ENCODE measurements at regions of chr12 and their contacts with region 1.

Region 1: GRCh38 chr12:49060237-49061156 is at the start of gene KMT2D:
- DNase-seq: peak; percentile 92
- CTCF ChIP-seq: no peak

Region 2: DNA sequence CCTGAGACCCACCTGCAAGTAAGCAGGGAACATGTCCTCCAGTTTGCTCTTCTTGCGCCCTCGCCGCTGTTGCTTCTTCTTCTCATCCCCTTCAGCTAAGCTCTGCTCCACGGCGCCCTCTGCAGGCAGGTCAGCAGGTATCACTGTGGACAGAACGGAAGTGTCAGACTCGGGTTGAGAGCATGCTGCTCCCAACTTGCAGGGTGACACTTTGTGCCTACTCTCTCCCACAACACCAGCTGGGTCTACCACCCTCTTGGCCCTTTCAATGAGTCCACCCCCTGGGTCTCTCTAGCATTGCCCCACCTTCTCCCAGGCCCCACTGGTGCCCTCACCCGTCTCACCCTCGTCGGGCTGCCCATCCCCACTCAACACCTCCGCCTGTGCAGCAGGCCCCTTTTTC is 16.6 kb before region 1 on chr12:
- CTCF ChIA-PET with region 1: interaction called, 30 read pairs
- POLR2A ChIA-PET with region 1: interaction called, 3 read pairs
- DNase-seq: peak; percentile 85
- CTCF ChIP-seq: peak; percentile 81

Region 3: GRCh38 chr12:49079793-49080192 is 19.3 kb after region 1 on chr12:
- CTCF ChIA-PET with region 1: interaction called, 36 read pairs
- POLR2A ChIA-PET with region 1: no interaction called
- DNase-seq: no peak
- CTCF ChIP-seq: no peak

Region 4: DNA sequence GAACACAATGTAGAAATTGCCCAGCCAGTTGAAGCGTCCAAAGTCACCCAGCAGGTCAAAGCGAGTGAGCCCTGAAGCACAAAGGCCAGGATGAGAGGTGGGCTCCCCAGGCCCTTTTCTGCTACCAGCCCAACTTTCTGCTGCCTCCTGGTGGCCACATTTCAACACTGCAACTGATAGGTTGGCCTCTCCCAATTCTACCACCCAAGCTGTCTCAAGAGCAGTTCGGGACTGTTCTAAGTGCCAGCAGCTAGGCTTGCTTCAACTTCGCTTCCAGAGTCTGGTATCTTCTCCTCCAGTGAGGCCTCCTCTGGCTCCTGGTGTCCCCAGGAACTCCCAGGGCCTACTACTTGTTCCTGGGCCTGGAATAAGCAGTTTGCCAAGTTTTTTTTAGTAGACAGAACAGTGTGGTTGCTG is 37.5 kb after region 1 on chr12:
- CTCF ChIA-PET with region 1: interaction called, 184 read pairs
- POLR2A ChIA-PET with region 1: no interaction called
- DNase-seq: peak; percentile 69
- CTCF ChIP-seq: peak; percentile 72

Measured in GM10248 (cell line).